Aorta (tissue), 5 donors: ENCODE measurements at regions of chr7 and their contacts with region 1.

Region 1: GRCh38 chr7:71733107-71733870 is 601.3 kb downstream of the GALNT17 start:
- DNase-seq: peak; percentile 81 to 96
- ATAC-seq: peak; percentile 76
- H3K4me3 ChIP-seq: no peak overlapping the region
- H3K27ac ChIP-seq: no peak overlapping the region
- H3K4me1 ChIP-seq: no peaks in the 10 kb centered on the region
- H3K27me3 ChIP-seq: no peaks in the 10 kb centered on the region

Region 2: GRCh38 chr7:70829221-70830059 is 903.8 kb before region 1 on chr7:
- intact Hi-C with region 1: loop called in 1 of 2 experiments (anchors 5 kb)
- DNase-seq: peak; percentile 72 to 83
- ATAC-seq: peak; percentile 90
- H3K4me3 ChIP-seq: no peak overlapping the region
- H3K27ac ChIP-seq: no peak overlapping the region
- H3K4me1 ChIP-seq: no peaks in the 10 kb centered on the region
- H3K27me3 ChIP-seq: no peaks in the 10 kb centered on the region

Region 3: DNA sequence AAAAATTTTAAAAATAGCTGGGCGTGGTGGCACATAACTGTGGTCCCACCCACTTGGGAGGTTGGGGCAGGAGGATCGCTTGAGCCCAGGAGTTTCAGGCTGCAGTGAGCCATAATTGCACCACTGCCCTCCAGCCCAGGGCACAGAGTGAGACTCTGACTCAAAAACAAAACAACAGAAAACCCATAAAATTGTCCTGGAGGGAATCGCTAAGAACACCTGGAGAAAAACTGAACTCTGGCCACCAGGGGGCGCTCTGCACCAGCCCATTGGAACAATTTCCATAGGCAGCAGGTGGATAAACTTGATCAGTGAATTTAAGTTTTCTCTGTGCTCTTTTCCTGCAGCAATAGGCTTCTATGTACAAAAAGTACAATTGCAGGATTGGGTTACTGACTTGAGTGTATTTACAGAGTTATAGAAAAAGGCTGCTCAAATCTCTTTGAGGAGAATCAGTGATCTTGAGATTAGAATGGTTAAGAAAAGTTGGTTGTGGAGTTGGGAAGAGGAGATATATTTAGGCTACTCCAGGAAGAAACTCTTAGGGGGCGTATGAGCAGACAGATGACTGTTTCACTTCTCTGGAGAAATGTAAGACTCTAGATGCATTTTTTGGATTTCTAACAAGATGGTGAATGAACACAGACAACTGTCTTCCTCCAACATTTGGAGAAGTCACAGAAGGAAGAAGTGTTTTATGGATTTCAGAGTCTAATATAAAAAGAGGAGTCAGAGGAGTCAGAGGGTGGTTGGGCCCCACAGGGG is 876.2 kb before region 1 on chr7:
- intact Hi-C with region 1: loop called (anchors 1 kb)
- DNase-seq: peak; percentile 57 to 91
- ATAC-seq: no peak
- H3K4me3 ChIP-seq: no peak overlapping the region
- H3K27ac ChIP-seq: no peak overlapping the region
- H3K4me1 ChIP-seq: no peaks in the 10 kb centered on the region
- H3K27me3 ChIP-seq: peaks cover 0 to 2% of the 10 kb centered on the region in 2 donors

Region 4: DNA sequence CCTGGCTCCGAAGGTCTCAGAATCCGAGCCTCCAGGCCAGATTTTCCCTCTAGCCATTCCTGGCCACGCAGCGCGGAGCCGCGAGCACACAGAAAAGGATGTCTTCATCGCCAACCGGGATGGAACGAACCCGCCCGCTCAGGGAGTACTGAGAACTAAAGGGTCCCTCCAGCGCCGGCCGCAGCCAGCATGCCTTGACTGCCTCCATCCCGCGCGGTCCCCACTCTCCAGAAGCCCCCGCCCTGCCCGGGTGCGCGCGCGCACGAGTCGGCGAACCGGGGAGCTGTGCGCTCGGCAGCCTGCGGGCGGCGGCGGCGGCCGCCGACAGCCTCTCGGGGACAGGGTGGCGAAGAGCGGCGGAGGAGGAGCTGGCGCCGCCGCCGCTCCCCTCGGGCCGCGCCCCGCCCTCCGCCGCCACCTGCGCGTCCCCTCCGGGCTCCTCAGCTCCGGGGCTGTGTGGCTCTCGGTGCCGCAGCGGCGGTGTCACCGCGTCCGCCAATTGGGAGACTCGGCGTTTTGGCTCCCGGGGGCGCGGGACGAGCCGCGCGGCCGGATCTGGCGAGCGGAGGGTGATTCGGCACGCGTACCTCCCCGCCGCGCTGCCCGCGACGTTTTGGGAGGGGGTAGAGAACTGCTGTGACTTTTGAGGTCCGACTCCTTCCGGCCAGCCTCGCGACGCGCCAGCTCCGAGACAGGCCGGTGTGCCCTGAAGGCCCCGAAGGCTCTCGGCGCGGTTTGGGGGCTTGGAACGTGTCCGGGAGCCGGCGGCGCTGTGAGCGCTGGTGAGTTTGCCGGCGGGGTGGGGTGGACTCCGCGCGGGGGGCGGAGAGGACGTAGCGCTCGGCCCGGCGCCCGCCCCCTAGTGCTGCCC is 601.8 kb before region 1 on chr7:
- intact Hi-C with region 1: loop called (anchors 5 to 10 kb)
- DNase-seq: peak; percentile 58 to 92
- ATAC-seq: peak; percentile 71
- H3K4me3 ChIP-seq: peak overlapping the region; percentile 55 to 56
- H3K27ac ChIP-seq: no peak overlapping the region
- H3K4me1 ChIP-seq: no peaks in the 10 kb centered on the region
- H3K27me3 ChIP-seq: no peaks in the 10 kb centered on the region

Region 5: DNA sequence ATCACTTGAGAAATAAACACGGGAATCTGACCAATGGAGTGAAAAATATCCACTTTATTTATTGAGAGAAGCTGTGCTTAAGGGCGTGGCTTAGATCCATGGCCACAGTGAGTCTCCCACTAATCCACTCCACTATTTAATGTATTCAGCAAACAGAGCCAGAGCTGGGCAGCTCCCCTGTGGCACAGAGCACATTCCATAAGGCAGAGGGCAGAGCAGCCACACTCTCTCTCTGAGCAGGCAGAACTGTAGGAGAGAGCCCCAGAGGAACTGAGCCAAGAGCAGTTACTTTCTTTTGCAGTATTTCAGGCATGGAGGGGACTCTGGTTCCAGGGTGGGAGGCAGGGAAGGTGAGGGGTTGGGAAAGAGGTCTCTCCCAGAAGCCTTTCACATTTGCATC is 495.3 kb before region 1 on chr7:
- intact Hi-C with region 1: loop called in 1 of 2 experiments (anchors 5 kb)
- DNase-seq: peak in 1 of 2 donors; percentile 50
- ATAC-seq: peak; percentile 63
- H3K4me3 ChIP-seq: no peak overlapping the region
- H3K27ac ChIP-seq: no peak overlapping the region
- H3K4me1 ChIP-seq: peaks cover 0 to 2% of the 10 kb centered on the region in 2 donors
- H3K27me3 ChIP-seq: no peaks in the 10 kb centered on the region

Region 6: DNA sequence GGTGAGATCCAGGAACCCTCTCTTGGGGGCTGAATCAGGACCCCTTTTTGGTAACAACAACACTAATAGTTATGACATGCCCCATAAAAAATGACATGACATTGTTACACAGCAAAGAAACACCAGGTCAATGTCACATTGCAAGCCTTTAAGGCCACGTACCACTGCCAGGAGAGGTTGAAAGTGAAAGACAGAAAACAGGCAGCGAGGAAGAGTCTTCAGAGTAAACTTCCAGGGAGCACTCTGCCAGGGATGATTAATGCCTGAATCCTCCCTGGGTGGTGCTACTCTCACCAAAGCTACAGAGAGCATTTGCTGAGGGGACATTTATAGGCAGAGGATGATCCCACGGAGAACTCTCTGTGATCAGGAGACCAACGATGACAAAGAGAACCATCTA is 127.3 kb after region 1 on chr7:
- intact Hi-C with region 1: no loop called
- DNase-seq: no peak
- ATAC-seq: no peak
- H3K4me3 ChIP-seq: no peak overlapping the region
- H3K27ac ChIP-seq: no peak overlapping the region
- H3K4me1 ChIP-seq: no peaks in the 10 kb centered on the region
- H3K27me3 ChIP-seq: no peaks in the 10 kb centered on the region